Breast epithelium (tissue), 4 donors: ENCODE measurements at regions of chr5 and their contacts with region 1.

Region 1: DNA sequence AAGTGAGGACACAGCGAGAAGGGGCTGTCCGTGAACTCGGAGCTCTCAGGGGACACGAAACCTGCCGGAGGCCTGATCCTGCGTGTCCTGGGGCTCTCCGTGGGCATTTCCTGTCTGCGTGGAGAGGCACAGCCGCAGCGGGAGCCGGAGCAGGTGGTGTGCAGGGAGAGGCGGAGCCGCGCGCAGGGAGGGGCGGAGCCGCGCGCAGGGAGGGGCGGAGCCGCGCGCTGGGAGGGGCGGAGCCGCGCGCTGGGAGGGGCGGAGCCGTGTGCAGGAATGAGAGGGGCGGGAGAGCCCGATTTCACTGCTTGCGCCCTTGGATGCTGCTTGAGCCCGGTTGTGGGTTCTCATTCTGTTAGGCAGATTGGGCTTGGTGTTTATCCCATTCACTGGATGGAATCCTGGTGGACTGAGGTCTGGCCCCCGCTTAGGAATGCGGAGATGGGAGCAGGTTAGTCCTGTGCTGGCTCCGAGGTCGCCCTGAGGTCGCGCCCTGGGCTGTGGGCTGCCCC is 26.7 kb downstream of the NDUFS6 start:
- DNase-seq: no peak
- H3K4me3 ChIP-seq: no peak overlapping the region
- H3K27ac ChIP-seq: no peak overlapping the region
- H3K4me1 ChIP-seq: no peaks in the 10 kb centered on the region
- H3K27me3 ChIP-seq: no peaks in the 10 kb centered on the region
- CTCF ChIP-seq: no peak
- POLR2A ChIP-seq: no peak

Region 2: DNA sequence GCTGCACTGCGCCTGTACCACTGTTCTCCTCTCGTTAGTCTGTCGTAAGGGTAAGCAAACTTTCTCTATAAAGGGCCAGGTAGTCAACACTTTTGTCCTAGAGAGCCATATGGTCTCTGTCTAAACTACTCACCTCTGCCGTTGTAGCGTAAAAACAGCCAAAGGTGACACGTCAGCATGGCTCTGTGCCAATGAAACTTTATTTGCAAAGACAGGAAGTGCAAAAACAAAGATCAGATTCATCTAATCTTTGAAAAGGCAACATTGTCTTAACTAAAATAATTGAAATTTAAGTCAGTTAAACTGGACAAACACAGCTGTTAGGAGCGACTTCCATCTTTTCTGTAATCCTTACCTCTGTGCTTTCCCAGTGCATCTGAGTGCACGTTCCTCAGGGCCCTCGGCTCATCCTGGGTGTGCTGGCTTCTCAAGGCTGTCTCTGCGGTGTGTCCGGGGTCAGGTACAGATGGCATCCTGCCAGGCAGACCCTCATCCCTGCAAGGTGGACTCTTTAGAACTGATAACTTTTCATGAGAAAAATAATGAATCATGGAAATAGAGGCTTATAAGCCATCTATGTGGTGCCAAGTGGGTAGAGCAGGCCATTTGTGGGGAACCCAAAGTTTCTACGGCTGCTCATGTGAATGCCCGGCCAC is 90.0 kb after region 1 on chr5:
- intact Hi-C with region 1: loop called (anchors 2 kb)
- DNase-seq: peak in 1 of 2 donors; percentile 34
- H3K4me3 ChIP-seq: no peak overlapping the region
- H3K27ac ChIP-seq: no peak overlapping the region
- H3K4me1 ChIP-seq: no peaks in the 10 kb centered on the region
- H3K27me3 ChIP-seq: no peaks in the 10 kb centered on the region
- CTCF ChIP-seq: no peak
- POLR2A ChIP-seq: no peak